Activated naive CD8-positive, alpha-beta T cell treated with anti-CD3 and anti-CD28 coated beads, Interleukin-2, amount 10 ng/mL, durations not matched to agents 7 days and 5 days (primary cell): ENCODE measurements at regions of chr9 and their contacts with region 1.

Region 1: DNA sequence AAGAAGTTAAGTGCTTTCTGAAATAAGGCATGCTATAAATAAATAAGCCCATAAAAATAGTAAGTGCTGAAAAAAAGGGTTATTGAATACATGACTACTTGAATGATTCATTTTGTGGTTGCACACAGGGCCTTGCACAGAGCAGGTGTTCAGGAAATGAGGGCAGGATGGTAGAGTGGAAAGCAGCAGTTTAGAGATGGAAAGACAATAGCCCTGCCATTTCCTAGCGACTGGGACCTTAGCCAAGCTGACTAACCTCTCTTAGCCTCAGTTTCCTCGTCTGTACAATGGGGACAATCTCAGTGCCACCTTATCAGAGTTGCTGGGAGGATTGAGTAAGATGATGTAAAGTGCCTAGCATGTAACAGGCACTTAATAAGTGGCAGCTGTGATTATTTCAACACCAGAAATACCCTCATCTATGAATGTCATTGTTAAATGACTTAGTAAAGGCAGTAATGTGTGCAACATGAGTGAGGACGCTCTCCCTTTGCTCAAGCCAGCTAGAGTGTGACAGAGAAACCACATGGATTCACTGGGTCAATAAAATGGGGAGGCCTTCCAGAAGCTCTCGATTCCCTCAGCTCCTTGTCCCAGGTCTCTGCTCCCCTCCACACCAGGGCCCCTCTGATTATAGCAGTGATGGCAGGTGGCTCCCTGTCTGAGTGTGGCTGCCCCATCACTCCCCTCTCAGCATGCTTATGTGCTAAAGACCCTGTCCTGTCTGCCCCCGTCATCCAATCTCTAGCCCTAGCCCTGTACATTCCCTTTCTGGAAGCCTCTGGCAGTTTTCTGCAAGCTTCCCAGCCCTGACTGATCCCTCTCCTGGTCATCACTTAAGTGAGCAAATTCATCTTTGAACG is 16.0 kb upstream of the PHF19 start:
- DNase-seq: peak; percentile 39
- ATAC-seq: peak; percentile 44
- H3K4me3 Mint-ChIP-seq: peak overlapping the region; percentile 79
- H3K27ac Mint-ChIP-seq: peak overlapping the region; percentile 98
- H3K4me1 Mint-ChIP-seq: peaks cover 73% of the 10 kb centered on the region
- H3K27me3 Mint-ChIP-seq: no peaks in the 10 kb centered on the region

Region 2: DNA sequence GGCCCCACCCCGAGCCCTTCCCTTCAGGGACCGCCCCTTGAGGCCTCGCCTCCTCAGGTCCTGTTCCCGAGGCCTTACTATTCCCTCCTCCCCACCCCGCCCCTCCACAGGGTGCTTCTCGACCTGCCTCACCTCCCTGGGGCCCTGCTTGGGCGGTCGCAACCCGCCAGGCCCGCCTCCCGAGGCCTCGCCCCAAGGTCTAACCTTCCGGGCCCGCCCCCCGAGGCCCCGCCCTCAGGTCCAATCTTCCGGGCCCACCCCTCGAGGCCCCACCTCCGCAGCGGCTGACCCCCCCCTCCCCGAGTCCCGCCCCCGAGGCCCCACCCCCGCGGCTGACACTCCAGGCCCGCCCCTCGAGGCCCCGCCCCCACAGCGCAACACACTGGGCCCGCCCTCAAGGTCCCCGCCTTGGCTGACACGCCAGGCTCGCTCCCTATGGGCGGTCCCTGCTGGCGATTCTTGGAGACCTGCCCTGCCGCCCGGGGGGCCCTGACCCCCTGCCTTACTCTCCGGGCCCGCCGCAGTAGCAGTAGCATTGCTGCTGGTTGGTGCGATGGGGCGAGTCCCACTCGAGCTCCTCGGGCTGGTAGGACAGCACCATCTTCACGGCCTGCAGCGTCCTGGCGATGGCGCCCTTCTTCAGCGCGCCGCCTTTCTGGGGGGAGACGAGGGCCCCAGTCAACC is 24.2 kb before region 1 on chr9:
- POLR2A ChIA-PET with region 1: interaction called, 210 read pairs
- DNase-seq: peak; percentile 98
- ATAC-seq: peak; percentile 92
- H3K4me3 Mint-ChIP-seq: peak overlapping the region; percentile 92
- H3K27ac Mint-ChIP-seq: peak overlapping the region; percentile 99
- H3K4me1 Mint-ChIP-seq: peaks cover 50% of the 10 kb centered on the region
- H3K27me3 Mint-ChIP-seq: no peaks in the 10 kb centered on the region

Region 3: DNA sequence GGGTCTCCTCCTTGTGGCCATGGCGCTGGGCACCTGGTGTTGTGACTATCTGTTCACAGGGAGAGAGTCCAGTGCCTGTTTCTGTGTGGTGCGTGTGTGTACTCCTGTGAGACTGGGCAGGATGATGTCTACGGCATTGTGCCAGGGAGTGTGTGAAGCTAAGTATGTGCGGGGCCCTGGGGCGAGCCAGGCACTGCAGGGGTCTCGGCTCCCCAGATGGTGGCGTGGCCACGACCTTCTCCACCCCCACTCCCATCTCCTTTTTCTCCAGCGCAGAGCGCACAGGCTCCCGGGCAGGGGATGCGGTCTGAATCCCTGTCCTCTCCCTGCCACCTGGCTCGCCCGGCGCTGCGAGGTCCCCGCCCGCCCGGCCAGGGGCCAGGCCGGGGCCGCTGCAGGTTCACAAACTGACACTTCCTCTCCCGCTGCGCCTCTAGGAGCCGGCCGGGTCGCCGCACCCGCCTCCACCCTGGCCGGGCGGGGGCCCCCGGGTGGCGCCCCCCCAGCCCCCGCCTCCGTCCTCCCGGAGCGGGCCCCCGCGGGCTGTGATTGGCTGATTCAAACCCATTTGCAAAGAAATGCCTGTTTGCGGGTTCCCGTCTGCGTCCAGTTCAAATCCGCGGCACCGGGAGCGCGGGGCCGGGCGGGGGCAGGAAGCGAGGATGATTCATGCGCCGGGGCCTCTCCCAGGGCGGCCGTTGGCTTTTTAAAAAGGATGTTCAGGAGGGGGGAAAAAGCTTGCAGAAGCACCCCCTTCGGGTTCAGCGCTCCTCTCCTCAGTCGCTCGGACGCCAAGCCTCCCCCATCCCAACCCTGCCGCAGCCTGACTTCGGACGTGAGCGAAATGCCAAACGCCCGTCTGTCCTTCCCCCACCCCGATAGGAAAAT is 16.8 kb before region 1 on chr9:
- POLR2A ChIA-PET with region 1: interaction called, 210 read pairs
- DNase-seq: peak; percentile 91
- ATAC-seq: peak; percentile 58
- H3K4me3 Mint-ChIP-seq: peak overlapping the region; percentile 91
- H3K27ac Mint-ChIP-seq: peak overlapping the region; percentile 89
- H3K4me1 Mint-ChIP-seq: peaks cover 72% of the 10 kb centered on the region
- H3K27me3 Mint-ChIP-seq: no peaks in the 10 kb centered on the region

Region 4: DNA sequence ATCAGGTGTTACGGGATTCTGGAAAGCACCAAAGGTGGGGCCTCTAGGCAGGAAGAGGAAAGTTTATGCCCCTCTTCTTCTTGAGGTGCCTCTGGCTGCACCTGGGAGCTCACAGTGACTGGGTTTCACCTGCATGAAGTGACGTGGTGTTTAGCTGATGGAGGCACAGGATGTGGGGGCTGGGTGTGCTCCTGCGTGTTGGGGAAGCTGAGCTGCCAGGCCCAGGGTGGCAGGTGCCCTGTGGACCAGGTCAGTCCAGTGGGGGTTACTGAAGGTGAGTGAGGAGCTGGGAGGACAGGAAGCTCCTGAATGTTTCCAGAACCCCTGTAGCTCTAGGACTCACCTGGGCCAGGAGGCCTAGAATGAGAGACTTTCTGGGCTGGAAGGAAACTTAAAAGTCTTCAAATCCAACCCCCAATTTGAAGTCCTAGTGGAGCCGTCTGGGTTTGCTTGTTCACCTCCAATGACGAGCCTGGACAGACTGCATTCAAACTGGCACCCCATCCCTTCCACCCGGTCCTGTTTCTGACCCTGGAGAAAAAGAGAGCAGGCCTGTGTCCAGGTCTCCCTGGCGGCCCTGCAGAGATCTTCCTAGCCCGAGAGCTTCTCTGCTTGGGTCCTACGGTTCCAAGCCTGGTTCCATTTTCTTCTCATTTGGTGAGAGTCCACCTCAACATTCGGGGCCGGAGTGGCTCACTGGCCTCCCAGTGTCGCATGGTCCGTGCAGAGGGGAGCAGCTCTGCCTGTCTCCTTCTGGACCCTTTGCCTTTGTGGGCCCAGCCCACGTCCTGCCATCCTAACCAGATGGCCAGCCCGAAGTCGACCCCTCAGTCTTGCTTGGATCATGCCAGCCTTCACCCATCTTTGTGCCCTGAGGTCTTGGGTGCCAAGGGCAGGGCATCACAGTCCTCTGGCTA is 11.3 kb after region 1 on chr9:
- POLR2A ChIA-PET with region 1: interaction called, 62 read pairs
- DNase-seq: peak; percentile 62
- ATAC-seq: peak; percentile 57
- H3K4me3 Mint-ChIP-seq: peak overlapping the region; percentile 62
- H3K27ac Mint-ChIP-seq: peak overlapping the region; percentile 93
- H3K4me1 Mint-ChIP-seq: peaks cover 77% of the 10 kb centered on the region
- H3K27me3 Mint-ChIP-seq: no peaks in the 10 kb centered on the region

Region 5: DNA sequence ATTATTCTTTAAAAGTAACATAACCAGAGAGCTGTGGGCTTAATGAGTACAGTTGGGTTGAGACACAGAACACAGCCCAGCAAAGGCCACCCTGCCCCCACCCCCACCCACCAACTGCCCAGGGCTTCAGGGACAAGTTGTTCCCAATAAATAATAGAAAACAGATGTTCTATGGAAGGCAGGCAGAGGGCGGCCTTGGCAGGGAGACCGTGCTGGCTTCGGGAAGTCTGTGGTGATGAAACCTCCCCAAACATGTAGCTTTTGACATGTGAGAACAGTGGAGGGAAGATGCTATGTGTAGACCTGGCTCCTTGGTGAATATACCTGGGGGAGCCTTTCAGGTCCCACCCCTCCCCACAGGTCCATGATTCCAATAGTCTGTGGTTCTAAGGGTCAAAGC is 23.6 kb after region 1 on chr9:
- POLR2A ChIA-PET with region 1: interaction called, 117 read pairs
- DNase-seq: no peak
- ATAC-seq: no peak
- H3K4me3 Mint-ChIP-seq: peak overlapping the region; percentile 60
- H3K27ac Mint-ChIP-seq: peak overlapping the region; percentile 83
- H3K4me1 Mint-ChIP-seq: peaks cover 66% of the 10 kb centered on the region
- H3K27me3 Mint-ChIP-seq: no peaks in the 10 kb centered on the region